K562 (cell line): ENCODE measurements at regions of chr9 and their contacts with region 1.

Region 1: GRCh38 chr9:128937310-128938165 is 9.9 kb downstream of the DOLK start:
- DNase-seq: no peak
- ATAC-seq: no peak
- H3K4me3 ChIP-seq: no peak overlapping the region
- H3K27ac ChIP-seq: no peak overlapping the region
- H3K4me1 ChIP-seq: peaks cover 3 to 17% of the 10 kb centered on the region in 2 experiments
- H3K27me3 ChIP-seq: no peaks in the 10 kb centered on the region
- CTCF ChIP-seq: no peak
- EP300 ChIP-seq: no peak
- POLR2A ChIP-seq: no peak
- RAD21 ChIP-seq: no peak

Region 2: DNA sequence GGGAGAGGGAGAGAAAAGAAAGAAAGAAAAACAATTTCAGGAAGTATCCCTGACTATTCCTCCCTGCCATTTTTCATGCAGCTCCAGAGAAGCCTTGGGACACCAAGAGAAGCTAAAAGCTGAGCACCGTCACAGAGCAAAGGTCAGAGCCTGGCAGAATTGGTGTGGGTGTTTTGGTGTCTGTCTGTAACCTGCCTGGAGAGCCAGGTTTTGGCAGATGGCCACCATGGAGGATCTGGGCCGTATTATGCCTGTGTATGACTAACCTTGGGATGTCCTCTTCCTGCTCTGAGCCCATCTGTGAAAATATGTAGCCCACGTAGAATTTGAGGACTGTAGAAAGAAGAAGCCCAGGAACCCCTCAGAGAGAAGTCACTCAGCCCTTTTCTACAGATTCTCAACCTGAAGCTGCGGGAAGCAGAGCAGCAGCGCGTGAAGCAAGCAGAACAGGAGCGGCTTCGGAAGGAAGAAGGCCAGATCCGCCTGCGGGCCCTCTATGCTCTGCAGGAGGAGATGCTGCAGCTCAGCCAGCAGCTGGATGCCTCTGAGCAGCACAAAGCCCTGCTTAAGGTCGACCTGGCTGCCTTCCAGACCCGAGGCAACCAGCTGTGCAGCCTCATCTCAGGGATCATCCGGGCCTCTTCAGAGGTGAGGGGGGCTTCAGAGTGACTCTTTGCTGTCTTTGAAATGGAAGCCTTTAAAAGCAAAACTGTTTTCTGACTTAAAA is 414.2 kb before region 1 on chr9:
- CTCF ChIA-PET with region 1: no interaction called
- POLR2A ChIA-PET with region 1: no interaction called
- in situ Hi-C with region 1: no loop called
- intact Hi-C with region 1: no loop called
- DNase-seq: no peak
- ATAC-seq: no peak; the same call in 2 of the 3 replicates
- H3K4me3 ChIP-seq: no peak overlapping the region
- H3K27ac ChIP-seq: no peak overlapping the region
- H3K4me1 ChIP-seq: peaks cover 0 to 4% of the 10 kb centered on the region in 2 experiments; a peak in 2 of 5 replicates
- H3K27me3 ChIP-seq: no peaks in the 10 kb centered on the region
- CTCF ChIP-seq: no peak
- EP300 ChIP-seq: no peak
- POLR2A ChIP-seq: no peak
- RAD21 ChIP-seq: no peak

Region 3: GRCh38 chr9:128947422-128948301 is 10.1 kb after region 1 on chr9 and contains the starts of genes DOLK and NUP188:
- CTCF ChIA-PET with region 1: no interaction called
- POLR2A ChIA-PET with region 1: interaction called, 10 read pairs
- in situ Hi-C with region 1: no loop called
- intact Hi-C with region 1: no loop called
- DNase-seq: peak; percentile 96 to 100 (median 100)
- ATAC-seq: peak; percentile 85
- H3K4me3 ChIP-seq: peak within 1 kb of the TSS; percentile 78
- H3K27ac ChIP-seq: peak within 1 kb of the TSS; percentile 90
- H3K4me1 ChIP-seq: peaks cover 20 to 37% of the 10 kb centered on the region in 2 experiments
- H3K27me3 ChIP-seq: no peaks in the 10 kb centered on the region
- CTCF ChIP-seq: no peak
- EP300 ChIP-seq: no peak
- POLR2A ChIP-seq: peak; percentile 97
- RAD21 ChIP-seq: no peak
- polyA plus RNA-seq, gene DOLK: 2.6 to 3.7 TPM
- polyA plus RNA-seq, gene NUP188: 11.7 to 17.9 TPM

Region 4: DNA sequence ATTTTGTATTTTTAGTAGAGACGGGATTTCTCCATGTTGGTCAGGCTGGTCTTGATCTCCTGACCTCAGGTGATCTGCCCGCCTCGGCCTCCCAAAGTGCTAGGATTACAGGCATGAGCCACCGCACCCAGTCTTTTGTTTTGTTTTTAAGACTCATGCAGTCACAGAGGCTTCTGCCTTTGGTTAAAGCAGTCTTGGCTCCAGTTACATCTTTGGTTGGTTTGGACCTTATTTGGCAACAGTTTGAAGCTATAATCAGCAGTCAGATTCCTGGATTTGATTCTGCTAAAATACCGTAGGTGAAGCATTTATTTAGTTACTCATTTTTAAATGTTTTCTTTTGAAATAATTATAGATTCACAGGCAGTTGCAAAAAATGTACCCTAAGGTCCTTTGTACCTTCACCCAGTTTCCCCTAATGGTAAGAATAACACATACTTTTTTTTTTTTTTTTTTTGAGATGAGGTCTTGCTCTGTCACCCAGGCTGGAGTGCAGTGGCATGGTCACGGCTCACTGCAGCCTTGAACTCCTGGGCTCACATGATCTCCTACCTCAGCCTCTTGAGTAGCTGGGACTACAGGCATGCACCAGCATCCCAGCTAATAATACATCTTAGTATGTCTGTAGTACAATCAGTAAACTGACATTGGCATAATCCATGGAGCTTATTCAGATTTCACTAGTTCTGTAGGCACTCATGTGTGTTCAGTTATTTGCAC is 913.4 kb after region 1 on chr9:
- CTCF ChIA-PET with region 1: no interaction called
- POLR2A ChIA-PET with region 1: no interaction called
- in situ Hi-C with region 1: no loop called
- intact Hi-C with region 1: no loop called
- DNase-seq: no peak
- ATAC-seq: no peak
- H3K4me3 ChIP-seq: no peak overlapping the region
- H3K27ac ChIP-seq: no peak overlapping the region
- H3K4me1 ChIP-seq: peaks cover 0 to 4% of the 10 kb centered on the region in 2 experiments; a peak in 2 of 5 replicates
- H3K27me3 ChIP-seq: no peaks in the 10 kb centered on the region
- CTCF ChIP-seq: no peak
- EP300 ChIP-seq: no peak
- POLR2A ChIP-seq: no peak
- RAD21 ChIP-seq: no peak